Right ventricle myocardium superior (tissue), 1 donor: ENCODE measurements at regions of chr7 and their contacts with region 1.

Region 1: DNA sequence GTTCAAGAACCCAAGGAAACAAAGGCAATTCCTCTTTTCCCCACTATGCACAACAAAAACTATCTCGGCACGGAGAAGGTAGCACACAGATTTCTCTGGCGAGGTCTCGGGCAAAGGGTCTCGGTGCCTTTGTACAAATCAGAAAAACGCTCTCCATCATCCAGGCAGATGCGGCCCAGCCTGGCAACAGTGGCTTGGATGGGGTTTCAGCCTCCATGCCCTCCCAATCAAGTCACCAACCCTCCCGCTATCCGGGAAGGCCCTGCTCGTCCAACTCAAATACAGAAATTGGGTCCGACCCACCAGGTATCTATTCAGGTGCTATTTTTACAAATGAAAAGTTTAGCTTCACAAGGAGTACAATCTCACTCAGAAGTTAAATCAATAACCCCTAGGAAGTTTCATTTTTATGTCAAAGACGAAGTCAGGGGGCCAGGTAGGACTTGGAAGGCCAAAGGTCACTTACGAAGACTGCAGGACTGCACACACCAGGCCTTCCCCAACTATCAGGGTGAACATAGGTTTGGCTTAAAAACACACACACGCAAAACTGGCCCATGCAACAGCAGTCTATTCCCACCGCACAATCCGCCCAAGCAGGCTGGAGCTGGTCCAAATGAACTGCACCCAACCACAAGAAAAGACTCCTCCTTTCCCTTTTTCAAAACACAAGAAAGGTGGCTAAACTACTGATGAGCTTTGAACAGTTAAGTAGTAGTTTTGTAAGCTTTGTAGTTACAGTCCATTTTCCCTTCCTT is 43.0 kb downstream of the GNA12 start:
- DNase-seq: peak; percentile 79
- ATAC-seq: peak; percentile 16

Region 2: GRCh38 chr7:2567679-2568278 is 233.3 kb before region 1 on chr7:
- intact Hi-C with region 1: no loop called
- DNase-seq: no peak
- ATAC-seq: peak; percentile 89

Region 3: DNA sequence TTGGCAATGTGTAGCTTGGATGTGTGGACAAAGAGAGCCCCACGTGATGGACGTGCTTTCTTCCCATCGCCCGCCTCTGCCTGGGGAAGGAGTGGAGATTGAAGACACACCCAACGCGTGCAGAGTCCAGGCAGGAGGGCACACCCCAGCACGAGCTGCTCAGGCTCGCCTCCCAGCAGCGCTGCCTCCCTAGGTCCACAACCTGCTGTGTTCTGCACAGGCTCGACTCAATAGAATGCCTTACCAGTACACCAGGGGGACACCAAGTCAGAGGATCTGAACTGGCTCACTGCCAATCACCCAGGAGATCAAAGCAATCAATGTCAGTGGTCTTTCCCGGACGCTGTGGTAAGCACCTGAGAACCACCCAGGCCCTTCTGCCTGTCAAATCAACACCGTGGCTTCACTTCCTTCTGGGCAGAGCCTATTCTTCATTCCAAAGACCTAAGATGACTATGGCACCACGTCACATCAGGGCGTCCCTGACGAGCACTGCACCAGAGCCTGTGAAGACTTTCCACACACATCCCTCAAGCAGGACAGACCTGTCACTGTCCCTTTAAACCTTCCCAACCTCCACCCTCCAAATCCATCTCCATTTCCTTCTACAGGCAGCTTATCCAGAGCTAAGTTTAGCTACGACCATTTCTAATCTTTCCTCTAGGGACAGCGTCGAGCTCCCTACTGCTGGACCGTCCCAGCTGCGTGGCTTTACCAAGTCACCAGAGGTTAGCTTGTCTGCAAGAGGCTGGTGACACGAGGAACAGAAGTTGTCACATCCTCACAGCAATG is 40.8 kb before region 1 on chr7:
- intact Hi-C with region 1: loop called (anchors 5 kb)
- DNase-seq: peak; percentile 64
- ATAC-seq: peak; percentile 83